ENCODE measurements at regions of chr9 and their contacts with region 1.

Region 1: DNA sequence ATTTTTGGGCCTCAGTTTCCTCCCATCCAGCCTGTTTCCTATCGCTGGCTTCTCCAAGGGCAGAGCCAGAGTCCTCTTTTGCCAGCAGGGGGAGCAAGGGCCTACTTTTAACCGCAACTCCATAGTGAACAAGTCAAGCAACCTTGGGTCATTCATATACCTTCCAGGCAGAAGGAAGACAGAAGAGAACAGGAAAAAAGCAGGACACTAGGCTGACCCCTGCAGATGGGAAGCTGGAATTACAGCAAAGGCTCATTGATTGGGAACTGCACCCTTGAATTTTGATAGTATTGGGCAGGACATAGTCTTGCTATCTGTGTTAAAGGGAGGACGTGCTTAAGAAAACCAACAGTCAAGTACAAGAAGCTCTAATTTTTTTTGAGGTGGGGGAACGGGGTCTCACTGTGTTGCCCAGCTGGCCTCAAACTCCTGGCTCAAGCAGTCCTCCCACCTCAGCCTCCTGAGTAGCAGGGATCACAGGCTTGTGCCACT is 30.1 kb downstream of the QRFP start:
- DNase-seq: peak; percentile 91
- ATAC-seq: peak; percentile 95
- H3K4me3 Mint-ChIP-seq: no peak overlapping the region
- H3K27ac Mint-ChIP-seq: peak overlapping the region; percentile 77; the same call in 1 of the 2 replicates
- H3K4me1 Mint-ChIP-seq: peaks cover 5% of the 10 kb centered on the region
- H3K27me3 Mint-ChIP-seq: no peaks in the 10 kb centered on the region
- CTCF ChIP-seq: peak; percentile 85

Region 2: DNA sequence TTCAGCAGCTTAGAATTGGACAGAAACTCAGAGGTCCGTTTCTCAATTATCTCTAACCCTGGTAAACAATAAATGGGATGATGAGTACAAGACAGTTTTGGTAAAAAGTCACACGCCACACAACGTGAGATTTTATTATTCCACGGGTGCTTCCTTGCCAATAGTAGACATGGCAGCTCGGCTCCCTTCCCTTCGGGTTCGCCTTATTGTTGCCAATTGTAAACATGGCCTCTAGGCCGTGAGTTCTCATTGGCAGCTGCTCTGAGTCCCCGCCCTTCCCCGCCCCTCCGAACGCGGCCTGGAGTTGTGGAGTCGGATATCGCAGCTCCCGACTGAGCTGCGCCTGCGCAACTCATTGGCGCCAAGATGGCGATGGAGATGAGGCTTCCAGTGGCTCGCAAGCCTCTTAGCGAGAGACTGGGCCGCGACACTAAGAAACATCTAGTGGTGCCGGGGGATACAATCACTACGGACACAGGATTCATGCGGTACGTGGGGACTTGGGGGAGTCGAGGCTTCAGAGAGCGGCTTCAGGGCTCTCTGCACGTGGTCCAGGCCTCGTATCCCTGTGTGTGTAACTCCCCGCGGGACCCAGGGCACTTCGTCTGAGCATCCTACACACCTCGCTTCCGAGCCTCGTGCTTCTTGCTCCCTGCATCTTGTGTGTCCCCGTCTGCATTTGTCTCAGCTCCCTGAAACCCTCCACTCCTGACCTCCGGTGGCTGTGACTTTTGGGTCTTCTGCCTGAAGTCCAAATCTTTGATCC is 172.9 kb before region 1 on chr9 and contains the start of gene EXOSC2:
- CTCF ChIA-PET with region 1: interaction called, 16 read pairs
- POLR2A ChIA-PET with region 1: interaction called, 4 read pairs
- DNase-seq: peak; percentile 98
- ATAC-seq: peak; percentile 73
- H3K4me3 Mint-ChIP-seq: peak within 1 kb of the TSS; percentile 98
- H3K27ac Mint-ChIP-seq: peak within 1 kb of the TSS; percentile 94
- H3K4me1 Mint-ChIP-seq: peaks cover 58% of the 10 kb centered on the region
- H3K27me3 Mint-ChIP-seq: no peaks in the 10 kb centered on the region
- CTCF ChIP-seq: no peak
- total RNA-seq, gene EXOSC2: 76.1 to 80.3 TPM (median 79.2 TPM) in 3 replicates

Region 3: DNA sequence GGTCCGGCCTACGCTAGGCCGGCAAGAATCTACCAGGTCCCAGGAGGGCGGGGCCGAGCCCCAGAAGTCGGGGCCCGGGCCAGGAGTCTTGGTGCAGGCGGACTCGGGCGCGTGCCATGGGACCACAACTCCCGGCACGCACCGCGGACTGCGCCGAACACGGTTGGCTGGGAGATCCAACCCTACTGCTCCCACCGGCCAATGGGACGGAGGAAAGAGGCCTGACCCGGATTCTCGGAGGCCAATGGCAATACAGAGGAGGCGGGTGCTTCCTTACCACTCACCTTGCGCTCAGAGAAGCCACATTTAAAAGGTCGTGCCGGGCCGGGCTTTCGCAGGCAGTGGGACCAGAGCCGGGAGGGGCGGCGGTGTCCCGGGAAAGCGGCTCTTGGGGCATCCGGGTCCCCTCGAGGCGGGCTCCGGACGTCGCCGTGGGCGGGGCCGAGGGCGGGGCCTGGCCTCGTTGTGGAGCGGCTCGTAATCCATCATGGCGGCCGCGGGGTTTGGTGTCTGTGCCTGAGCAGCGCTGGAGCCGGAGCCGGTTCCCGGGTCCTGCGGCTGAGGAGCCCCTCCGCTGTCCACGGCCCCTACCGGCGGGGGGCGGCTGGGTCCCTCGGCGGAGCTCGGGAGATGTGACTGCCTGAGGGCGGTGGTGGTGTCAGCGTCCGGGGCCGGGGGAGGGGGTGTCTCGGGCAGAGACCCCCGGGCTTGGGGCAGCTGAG is 153.8 kb before region 1 on chr9:
- CTCF ChIA-PET with region 1: interaction called, 83 read pairs
- POLR2A ChIA-PET with region 1: no interaction called
- DNase-seq: peak; percentile 99
- ATAC-seq: peak; percentile 97
- H3K4me3 Mint-ChIP-seq: peak overlapping the region; percentile 93
- H3K27ac Mint-ChIP-seq: peak overlapping the region; percentile 72
- H3K4me1 Mint-ChIP-seq: peaks cover 31% of the 10 kb centered on the region
- H3K27me3 Mint-ChIP-seq: no peaks in the 10 kb centered on the region
- CTCF ChIP-seq: no peak

Region 4: DNA sequence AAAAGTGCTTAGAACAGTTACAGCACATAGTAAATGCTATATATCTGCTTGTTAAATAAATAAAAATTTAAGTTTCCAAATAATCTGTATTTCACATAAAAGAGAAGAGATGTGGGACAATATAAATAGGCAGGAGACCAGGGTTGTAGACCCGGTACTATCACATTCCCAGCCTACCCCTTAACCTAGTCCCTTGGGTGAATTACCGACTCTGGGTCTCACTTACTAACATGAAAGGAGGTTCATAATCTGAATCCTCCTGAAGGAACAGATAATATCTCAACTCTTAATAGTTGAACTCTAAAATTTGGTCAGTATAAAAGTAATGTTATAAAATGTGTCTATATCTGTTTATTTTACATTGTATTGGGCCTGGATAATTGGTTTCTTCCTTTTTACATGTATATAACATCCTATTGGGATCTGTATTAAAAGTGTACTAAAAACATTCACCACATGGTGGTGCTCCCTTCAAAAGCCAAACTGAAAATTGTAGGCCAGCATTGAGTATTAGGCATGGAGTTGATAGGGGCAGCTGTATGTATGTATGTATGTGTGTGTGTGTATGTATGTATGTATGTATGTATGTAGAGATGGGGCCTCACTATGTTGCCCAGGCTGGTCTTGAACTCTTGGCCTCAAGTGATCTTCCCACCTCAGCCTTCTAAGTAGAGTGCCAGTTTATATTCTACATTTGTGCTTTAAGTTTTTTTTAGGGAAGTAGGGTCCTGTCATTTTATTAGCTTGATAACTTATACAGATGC is 95.7 kb before region 1 on chr9:
- CTCF ChIA-PET with region 1: interaction called, 44 read pairs
- POLR2A ChIA-PET with region 1: no interaction called
- DNase-seq: no peak
- ATAC-seq: peak; percentile 85
- H3K4me3 Mint-ChIP-seq: no peak overlapping the region
- H3K27ac Mint-ChIP-seq: no peak overlapping the region
- H3K4me1 Mint-ChIP-seq: peaks cover 44% of the 10 kb centered on the region
- H3K27me3 Mint-ChIP-seq: no peaks in the 10 kb centered on the region
- CTCF ChIP-seq: no peak; the same call in 1 of the 2 replicates

Region 5: DNA sequence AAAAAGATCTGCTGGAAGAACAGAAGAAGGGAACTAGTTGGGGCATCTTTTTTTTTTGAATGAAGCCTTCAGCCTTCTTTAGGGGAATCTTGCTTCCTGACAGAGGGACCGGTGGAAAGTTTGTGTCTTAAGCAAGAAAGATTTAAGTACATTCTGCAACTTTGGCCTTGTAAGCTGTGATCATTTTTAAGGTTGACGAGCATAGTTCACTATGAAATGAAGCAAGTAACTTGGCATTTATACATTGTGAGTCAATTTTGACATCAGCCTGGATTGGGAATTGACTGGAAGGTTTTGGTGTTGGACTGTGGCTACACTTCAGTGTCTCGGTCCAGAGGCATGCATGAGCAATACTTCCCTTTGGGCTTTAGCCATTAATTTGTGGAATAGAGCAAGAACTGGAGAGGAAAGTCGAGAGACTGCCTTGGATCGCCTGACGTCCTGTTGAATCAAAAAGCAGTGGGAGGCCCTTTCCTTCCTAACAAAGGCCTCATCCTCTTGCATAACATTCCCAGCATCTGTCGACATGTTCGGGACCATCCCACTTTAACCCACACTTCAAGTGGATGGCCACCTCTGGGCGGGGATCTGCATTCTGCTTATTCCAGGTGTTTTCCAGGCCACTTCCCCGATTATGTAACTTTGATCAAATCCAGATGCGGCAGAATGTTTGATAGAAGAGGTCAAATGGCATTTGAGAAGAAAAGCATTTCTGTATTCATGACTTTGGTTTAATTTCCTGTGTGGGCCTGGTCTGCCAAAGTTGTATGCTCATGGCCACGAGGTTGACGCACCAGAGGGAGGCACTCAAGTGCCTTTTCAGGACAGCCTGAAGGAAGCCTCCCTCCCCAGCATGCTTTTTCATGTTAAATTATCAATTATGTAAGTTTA is 18.9 kb before region 1 on chr9:
- CTCF ChIA-PET with region 1: interaction called, 13 read pairs
- POLR2A ChIA-PET with region 1: no interaction called
- DNase-seq: peak; percentile 46
- ATAC-seq: peak; percentile 82
- H3K4me3 Mint-ChIP-seq: no peak overlapping the region; the same call in 1 of the 2 replicates
- H3K27ac Mint-ChIP-seq: peak overlapping the region; percentile 94
- H3K4me1 Mint-ChIP-seq: peaks cover 63% of the 10 kb centered on the region
- H3K27me3 Mint-ChIP-seq: no peaks in the 10 kb centered on the region
- CTCF ChIP-seq: no peak

Region 6: GRCh38 chr9:130932255-130933079 is 65.9 kb after region 1 on chr9:
- CTCF ChIA-PET with region 1: interaction called, 13 read pairs
- POLR2A ChIA-PET with region 1: interaction called, 3 read pairs
- DNase-seq: peak; percentile 35
- ATAC-seq: peak; percentile 29
- H3K4me3 Mint-ChIP-seq: 0 out of 2 replicates have a peak overlapping the region, but pooled peaks have one; percentile 0
- H3K27ac Mint-ChIP-seq: peak overlapping the region; percentile 80
- H3K4me1 Mint-ChIP-seq: peaks cover 47% of the 10 kb centered on the region
- H3K27me3 Mint-ChIP-seq: peaks cover 11% of the 10 kb centered on the region
- CTCF ChIP-seq: no peak

Region 7: GRCh38 chr9:131008909-131009618 is 142.5 kb after region 1 on chr9 and contains the start of gene LAMC3:
- CTCF ChIA-PET with region 1: interaction called, 12 read pairs
- POLR2A ChIA-PET with region 1: interaction called, 7 read pairs
- DNase-seq: peak; percentile 58
- ATAC-seq: peak; percentile 66
- H3K4me3 Mint-ChIP-seq: peak within 1 kb of the TSS; percentile 64
- H3K27ac Mint-ChIP-seq: no peak within 1 kb of the TSS
- H3K4me1 Mint-ChIP-seq: peaks cover 30% of the 10 kb centered on the region
- H3K27me3 Mint-ChIP-seq: peaks cover 16% of the 10 kb centered on the region
- CTCF ChIP-seq: no peak
- total RNA-seq, gene LAMC3: 35.9 to 50.9 TPM (median 36.0 TPM) in 3 replicates